ENCODE measurements at regions of chr1 and their contacts with region 1.

Region 1: DNA sequence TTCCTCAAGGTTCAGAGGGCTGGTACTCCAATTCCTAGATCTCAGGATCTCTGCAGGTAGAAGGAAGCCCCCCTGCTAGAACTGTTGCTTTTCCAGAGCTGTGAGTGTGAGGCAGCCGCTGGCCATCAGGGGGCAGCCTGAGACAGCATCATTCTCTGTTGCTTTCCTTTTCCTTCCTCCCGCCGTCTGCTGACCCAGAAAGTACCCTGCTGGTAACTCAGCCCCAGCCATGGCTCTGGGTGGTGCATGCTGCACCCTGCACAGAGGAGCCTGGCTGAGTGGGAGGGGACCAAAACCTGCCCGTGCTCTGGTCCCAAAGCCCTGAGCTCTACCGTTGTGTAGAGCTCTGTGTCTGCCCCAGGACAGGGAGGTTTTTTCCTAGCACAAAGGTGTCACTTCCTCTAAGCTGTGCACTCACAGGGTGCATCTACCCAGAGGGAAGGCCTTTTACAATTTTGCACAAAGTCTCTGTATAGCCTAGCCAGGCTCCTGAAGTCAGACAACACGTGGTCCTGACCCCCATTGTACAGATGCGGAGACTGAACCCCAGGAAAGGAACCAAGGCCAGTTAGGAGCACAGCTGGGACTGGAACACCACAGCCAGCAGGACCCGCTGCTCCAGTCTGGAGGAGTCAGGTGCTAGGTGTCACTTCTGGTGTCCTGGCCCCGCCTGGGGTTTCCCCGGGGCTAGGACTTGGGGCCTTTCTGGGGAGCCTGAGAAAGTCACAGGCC is 5.6 kb upstream of the FAM131C start:
- DNase-seq: peak; percentile 52 to 76
- ATAC-seq: peak; percentile 58 to 78
- H3K4me3 ChIP-seq: no peak overlapping the region
- H3K27ac ChIP-seq: peak overlapping the region; percentile 74 to 86
- H3K4me1 ChIP-seq: peaks cover 72% of the 10 kb centered on the region
- CTCF ChIP-seq: peak; percentile 76
- EP300 ChIP-seq: no peak
- POLR2A ChIP-seq: no peak
- RAD21 ChIP-seq: peak; percentile 91

Region 2: GRCh38 chr1:16101623-16102022 is 22.5 kb after region 1 on chr1:
- CTCF ChIA-PET with region 1: interaction called, 18 read pairs
- POLR2A ChIA-PET with region 1: no interaction called
- DNase-seq: no peak
- ATAC-seq: no peak
- H3K4me3 ChIP-seq: no peak overlapping the region
- H3K27ac ChIP-seq: no peak overlapping the region
- H3K4me1 ChIP-seq: 0 out of 3 replicates have a peak, but pooled peaks cover 5% of the 10 kb centered on the region
- CTCF ChIP-seq: no peak
- EP300 ChIP-seq: no peak
- POLR2A ChIP-seq: no peak
- RAD21 ChIP-seq: no peak

Region 3: GRCh38 chr1:16139473-16139962 is 60.4 kb after region 1 on chr1:
- CTCF ChIA-PET with region 1: interaction called, 222 read pairs
- POLR2A ChIA-PET with region 1: interaction called, 3 read pairs
- DNase-seq: peak in 1 of 2 experiments; percentile 57
- ATAC-seq: peak in 1 of 2 experiments; percentile 1; a peak in 2 of 6 replicates
- H3K4me3 ChIP-seq: peak overlapping the region; percentile 13; the same call in 1 of the 3 replicates
- H3K27ac ChIP-seq: peak overlapping the region; percentile 95 to 100
- H3K4me1 ChIP-seq: peaks cover 67% of the 10 kb centered on the region
- CTCF ChIP-seq: no peak
- EP300 ChIP-seq: 0 out of 5 replicates have a peak, but pooled peaks of 1 of the 2 experiments have one; percentile 15
- POLR2A ChIP-seq: no peak
- RAD21 ChIP-seq: no peak

Region 4: DNA sequence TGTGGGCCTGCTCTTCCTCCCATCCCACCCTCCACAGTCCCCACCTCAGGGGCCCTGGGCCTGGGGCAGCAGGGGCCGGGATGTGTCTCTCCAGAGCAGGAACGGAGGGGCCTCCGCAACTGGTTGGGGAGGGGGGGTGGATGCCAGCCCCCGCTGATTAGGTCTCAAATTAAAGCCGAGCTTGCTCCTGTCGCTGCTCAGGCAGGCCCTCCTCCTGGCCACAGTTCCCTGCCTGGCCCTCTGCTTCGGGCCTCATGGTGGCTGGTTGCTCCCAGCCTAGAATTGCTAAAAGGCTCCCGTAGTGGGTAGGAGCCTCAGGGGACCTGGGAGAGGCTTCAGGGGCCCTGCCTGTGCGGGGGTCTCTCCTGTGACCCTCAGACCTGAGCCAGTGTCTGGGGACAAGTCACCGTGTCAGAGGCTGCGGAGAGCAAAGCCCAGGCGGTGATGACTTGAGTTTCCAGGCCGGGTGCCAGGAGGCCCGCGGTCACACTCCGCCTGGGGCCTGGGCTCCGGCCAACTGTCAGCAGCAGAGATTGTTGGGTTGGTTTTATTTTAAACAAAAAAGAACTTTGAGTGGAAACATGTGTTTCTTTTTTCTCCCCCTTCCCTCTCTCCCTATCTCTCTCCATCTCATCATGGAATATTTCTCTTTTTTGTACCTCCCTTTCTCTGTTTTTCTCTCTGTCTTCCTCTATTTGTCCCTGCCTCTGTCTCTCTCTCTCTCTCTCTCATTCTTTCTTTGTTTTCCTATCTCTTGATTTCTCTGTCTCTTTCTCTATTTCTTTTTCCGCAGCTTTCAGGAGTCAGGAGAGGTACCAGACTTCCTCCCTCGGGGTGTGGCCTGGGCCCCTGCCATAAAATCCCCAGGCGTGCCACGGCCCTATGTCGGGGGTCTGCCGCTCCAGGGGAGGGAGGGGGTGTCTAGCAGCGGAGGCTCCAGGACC is 96.8 kb after region 1 on chr1:
- CTCF ChIA-PET with region 1: interaction called, 318 read pairs
- POLR2A ChIA-PET with region 1: no interaction called
- DNase-seq: peak in 1 of 2 experiments; percentile 74
- ATAC-seq: peak; percentile 26 to 41; a peak in 3 of 6 replicates
- H3K4me3 ChIP-seq: no peak overlapping the region
- H3K27ac ChIP-seq: peak overlapping the region; percentile 96 to 97
- H3K4me1 ChIP-seq: peaks cover 96% of the 10 kb centered on the region
- CTCF ChIP-seq: no peak
- EP300 ChIP-seq: no peak
- POLR2A ChIP-seq: no peak
- RAD21 ChIP-seq: no peak

Region 5: DNA sequence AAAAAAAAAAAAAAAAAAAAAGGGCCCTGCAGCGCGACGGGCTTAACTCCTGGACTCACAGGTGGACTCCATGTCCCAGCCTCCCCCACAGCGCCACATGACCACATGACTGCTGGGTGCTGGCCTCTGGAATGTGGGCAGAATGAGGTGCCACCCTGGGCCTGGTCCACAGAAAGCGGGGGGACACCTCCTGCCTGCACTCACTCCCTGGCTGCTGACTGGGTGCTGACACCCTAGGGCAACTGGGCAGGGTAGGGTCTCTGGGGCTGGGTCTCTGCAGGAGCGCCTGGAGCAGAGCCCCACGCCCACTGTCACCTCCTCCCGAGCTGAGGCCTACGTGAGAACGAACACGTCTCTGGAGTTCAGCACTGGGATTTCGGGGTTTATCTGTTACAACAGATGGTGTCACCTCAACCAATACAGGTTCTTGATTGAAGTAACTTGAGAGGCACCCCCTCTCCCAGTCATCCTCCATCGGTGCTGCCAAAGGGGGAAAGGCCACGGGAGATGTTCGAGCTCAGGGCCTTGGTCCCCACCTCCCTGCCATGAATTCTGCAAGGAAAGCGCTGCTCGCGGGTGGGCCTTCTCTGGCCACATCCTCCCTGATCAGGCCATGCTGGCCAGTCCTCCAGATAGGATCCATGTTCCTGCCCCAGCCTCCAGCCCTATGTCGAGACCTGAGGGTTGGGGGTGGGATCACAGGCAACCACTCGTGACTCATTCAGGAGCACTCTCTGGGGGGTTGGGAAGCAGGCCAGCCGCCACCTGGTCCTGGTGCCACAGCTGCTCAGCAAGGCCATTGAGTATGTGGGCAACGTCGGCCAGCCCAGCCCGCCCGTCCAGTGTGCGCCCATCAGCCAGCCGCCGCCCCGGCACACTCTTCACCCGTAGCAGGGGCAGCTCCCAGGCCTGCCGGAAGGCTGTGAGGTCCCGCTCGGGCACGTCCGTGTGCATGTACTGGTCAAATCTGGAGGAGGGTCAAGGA is 152.5 kb after region 1 on chr1:
- CTCF ChIA-PET with region 1: interaction called, 16 read pairs
- POLR2A ChIA-PET with region 1: no interaction called
- DNase-seq: no peak
- ATAC-seq: no peak
- H3K4me3 ChIP-seq: no peak overlapping the region
- H3K27ac ChIP-seq: no peak overlapping the region
- H3K4me1 ChIP-seq: peaks cover 6% of the 10 kb centered on the region
- CTCF ChIP-seq: no peak
- EP300 ChIP-seq: no peak
- POLR2A ChIP-seq: no peak
- RAD21 ChIP-seq: no peak

Region 6: GRCh38 chr1:16366722-16367257 is 287.7 kb after region 1 on chr1 and contains the start of gene SZRD1:
- CTCF ChIA-PET with region 1: interaction called, 14 read pairs
- POLR2A ChIA-PET with region 1: no interaction called
- DNase-seq: peak; percentile 78 to 99
- ATAC-seq: peak; percentile 88 to 91
- H3K4me3 ChIP-seq: peak within 1 kb of the TSS; percentile 71
- H3K27ac ChIP-seq: peak within 1 kb of the TSS; percentile 96 to 97
- H3K4me1 ChIP-seq: peaks cover 35% of the 10 kb centered on the region
- CTCF ChIP-seq: no peak
- EP300 ChIP-seq: no peak
- POLR2A ChIP-seq: no peak
- RAD21 ChIP-seq: no peak
- polyA plus RNA-seq, gene SZRD1: 56.8 and 62.9 TPM in 2 replicates

Measured in A549 (cell line).